ENCODE measurements at regions of chr10 and their contacts with region 1.

Region 1: GRCh38 chr10:77889277-77889903 is 37.2 kb downstream of the DLG5 start:
- H3K4me3 ChIP-seq: no peak overlapping the region
- H3K27ac ChIP-seq: no peak overlapping the region
- H3K4me1 ChIP-seq: peaks cover 12% of the 10 kb centered on the region
- CTCF ChIP-seq: no peak

Region 2: GRCh38 chr10:77912576-77912975 is 23.2 kb after region 1 on chr10:
- CTCF ChIA-PET with region 1: interaction called, 11 read pairs
- POLR2A ChIA-PET with region 1: interaction called, 3 read pairs
- H3K4me3 ChIP-seq: no peak overlapping the region
- H3K27ac ChIP-seq: no peak overlapping the region
- H3K4me1 ChIP-seq: peaks cover 4% of the 10 kb centered on the region; the same call in 1 of the 2 replicates
- CTCF ChIP-seq: no peak

Measured in HEK293 (cell line).